CD8-positive, alpha-beta T cell (primary cell): ENCODE measurements at regions of chr5 and their contacts with region 1.

Region 1: DNA sequence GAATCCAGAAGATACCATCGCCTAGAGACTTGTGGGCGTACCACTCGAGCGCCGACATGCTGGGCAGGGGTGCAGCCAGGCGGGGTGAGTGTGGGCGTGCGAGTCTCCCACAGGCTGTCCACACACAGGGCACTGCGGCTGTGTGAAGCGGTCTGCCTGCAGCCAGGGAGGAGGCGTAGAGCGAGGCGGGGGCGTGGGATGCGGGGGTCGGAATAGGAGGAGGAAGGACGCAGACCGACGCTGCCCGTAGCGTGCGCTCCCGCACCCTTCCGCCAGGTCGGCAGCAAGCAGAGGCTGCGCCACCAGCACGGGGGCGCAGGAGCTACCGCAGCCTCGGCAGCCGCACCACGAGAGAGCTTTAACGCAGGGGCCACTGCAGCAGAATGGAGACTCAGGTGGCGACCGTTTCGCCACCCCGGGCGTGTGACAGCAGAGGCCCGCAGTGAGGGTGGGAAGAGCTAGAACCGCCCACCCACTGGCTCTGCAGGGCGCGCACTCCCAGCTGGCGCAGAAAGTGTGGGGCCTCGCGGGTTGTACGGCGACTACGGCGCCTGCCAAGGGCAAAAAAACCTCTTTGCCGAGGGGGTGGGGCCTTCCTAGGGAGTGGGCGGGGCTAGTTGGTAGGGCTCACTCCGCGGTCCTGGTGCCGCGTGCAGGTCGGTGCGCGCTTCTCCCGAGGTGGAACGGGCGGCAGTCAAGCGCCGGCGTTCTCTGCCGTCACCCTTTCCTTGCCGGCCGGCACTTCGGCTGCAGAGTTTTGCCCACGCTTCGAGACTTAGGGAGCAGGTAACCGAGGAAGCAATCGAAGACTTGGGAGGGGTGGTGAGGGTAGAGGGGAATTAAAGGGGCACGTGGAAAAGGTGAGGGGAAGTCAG is at the starts of genes MBLAC2 and POLR3G:
- DNase-seq: peak; percentile 88 to 96 (median 93)
- ATAC-seq: peak; percentile 88
- H3K4me3 ChIP-seq: peak within 1 kb of the TSS; percentile 93 to 95
- H3K4me3 Mint-ChIP-seq: peak within 1 kb of the TSS; percentile 99
- H3K27ac ChIP-seq: peak within 1 kb of the TSS; percentile 68 to 76
- H3K27ac Mint-ChIP-seq: peak within 1 kb of the TSS; percentile 96
- H3K4me1 ChIP-seq: peaks cover 16% of the 10 kb centered on the region
- H3K4me1 Mint-ChIP-seq: peaks cover 41% of the 10 kb centered on the region
- H3K27me3 ChIP-seq: no peaks in the 10 kb centered on the region
- H3K27me3 Mint-ChIP-seq: no peaks in the 10 kb centered on the region
- CTCF ChIP-seq: peak; percentile 54
- total RNA-seq, gene MBLAC2: 2.8 to 3.2 TPM
- total RNA-seq, gene POLR3G: 0.69 to 1.0 TPM

Region 2: DNA sequence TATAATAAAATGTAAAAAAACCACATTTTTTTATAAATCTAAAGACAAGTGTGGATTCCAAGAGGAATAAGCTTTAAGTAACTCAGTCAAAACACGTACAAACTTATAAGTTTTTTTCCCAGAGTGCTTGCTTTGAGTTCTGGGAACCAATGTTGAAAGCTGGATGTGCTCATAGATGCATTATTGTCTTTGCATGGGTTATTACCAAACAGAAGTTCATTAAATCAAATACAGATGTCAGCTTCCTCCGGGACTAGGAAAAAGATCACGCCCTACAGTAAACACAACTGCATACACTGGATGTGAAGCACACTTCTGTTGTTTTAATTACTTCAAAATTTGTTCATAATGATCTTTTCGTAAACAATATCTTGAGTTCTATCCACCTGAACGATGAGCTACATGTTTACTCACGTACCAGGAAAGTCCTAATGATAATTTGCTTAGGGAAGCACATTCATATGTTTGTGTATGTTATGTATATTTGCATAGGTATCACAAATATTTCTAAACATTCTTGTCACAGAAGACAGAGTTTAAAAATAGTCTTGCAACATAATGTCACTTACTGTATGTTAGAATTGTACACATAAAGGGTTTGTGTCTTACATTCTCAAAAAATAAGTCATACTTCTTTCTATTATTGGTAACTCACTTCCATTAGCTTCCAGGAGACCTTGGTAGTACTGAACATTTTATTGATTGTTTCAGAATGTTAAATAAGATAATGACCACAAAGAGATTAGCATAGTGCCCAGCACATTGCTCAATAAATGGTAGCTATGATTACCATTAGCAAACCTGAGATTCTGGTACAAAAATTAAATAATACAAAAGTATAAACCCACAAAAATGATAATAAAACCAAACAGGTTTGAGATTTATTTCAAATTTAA is 492.3 kb before region 1 on chr5:
- CTCF ChIA-PET with region 1: no interaction called
- POLR2A ChIA-PET with region 1: no interaction called
- intact Hi-C with region 1: no loop called
- DNase-seq: no peak
- ATAC-seq: no peak
- H3K4me3 ChIP-seq: no peak overlapping the region
- H3K4me3 Mint-ChIP-seq: no peak overlapping the region
- H3K27ac ChIP-seq: no peak overlapping the region
- H3K27ac Mint-ChIP-seq: no peak overlapping the region
- H3K4me1 ChIP-seq: no peaks in the 10 kb centered on the region
- H3K4me1 Mint-ChIP-seq: no peaks in the 10 kb centered on the region
- H3K27me3 ChIP-seq: no peaks in the 10 kb centered on the region
- H3K27me3 Mint-ChIP-seq: no peaks in the 10 kb centered on the region
- CTCF ChIP-seq: no peak

Region 3: GRCh38 chr5:90409318-90410177 is 64.9 kb before region 1 on chr5 and contains the start of gene CETN3:
- CTCF ChIA-PET with region 1: interaction called, 6 read pairs
- POLR2A ChIA-PET with region 1: interaction called, 35 read pairs
- intact Hi-C with region 1: loop called (anchors 1 kb)
- DNase-seq: peak; percentile 81 to 96 (median 89)
- ATAC-seq: peak; percentile 90
- H3K4me3 ChIP-seq: peak within 1 kb of the TSS; percentile 91 to 99
- H3K4me3 Mint-ChIP-seq: no peak within 1 kb of the TSS
- H3K27ac ChIP-seq: peak within 1 kb of the TSS; percentile 93 to 95
- H3K27ac Mint-ChIP-seq: no peak within 1 kb of the TSS
- H3K4me1 ChIP-seq: peaks cover 7% of the 10 kb centered on the region
- H3K4me1 Mint-ChIP-seq: peaks cover 24% of the 10 kb centered on the region
- H3K27me3 ChIP-seq: no peaks in the 10 kb centered on the region
- H3K27me3 Mint-ChIP-seq: no peaks in the 10 kb centered on the region
- CTCF ChIP-seq: no peak
- total RNA-seq, gene CETN3: 2.4 to 3.4 TPM

Region 4: GRCh38 chr5:90440644-90441043 is 33.8 kb before region 1 on chr5:
- CTCF ChIA-PET with region 1: interaction called, 6 read pairs
- POLR2A ChIA-PET with region 1: no interaction called
- intact Hi-C with region 1: loop called (anchors 1 kb)
- DNase-seq: no peak
- ATAC-seq: no peak
- H3K4me3 ChIP-seq: no peak overlapping the region
- H3K4me3 Mint-ChIP-seq: peak overlapping the region; percentile 82
- H3K27ac ChIP-seq: no peak overlapping the region
- H3K27ac Mint-ChIP-seq: no peak overlapping the region
- H3K4me1 ChIP-seq: no peaks in the 10 kb centered on the region
- H3K4me1 Mint-ChIP-seq: peaks cover 8% of the 10 kb centered on the region
- H3K27me3 ChIP-seq: no peaks in the 10 kb centered on the region
- H3K27me3 Mint-ChIP-seq: peaks cover 5% of the 10 kb centered on the region
- CTCF ChIP-seq: no peak

Region 5: DNA sequence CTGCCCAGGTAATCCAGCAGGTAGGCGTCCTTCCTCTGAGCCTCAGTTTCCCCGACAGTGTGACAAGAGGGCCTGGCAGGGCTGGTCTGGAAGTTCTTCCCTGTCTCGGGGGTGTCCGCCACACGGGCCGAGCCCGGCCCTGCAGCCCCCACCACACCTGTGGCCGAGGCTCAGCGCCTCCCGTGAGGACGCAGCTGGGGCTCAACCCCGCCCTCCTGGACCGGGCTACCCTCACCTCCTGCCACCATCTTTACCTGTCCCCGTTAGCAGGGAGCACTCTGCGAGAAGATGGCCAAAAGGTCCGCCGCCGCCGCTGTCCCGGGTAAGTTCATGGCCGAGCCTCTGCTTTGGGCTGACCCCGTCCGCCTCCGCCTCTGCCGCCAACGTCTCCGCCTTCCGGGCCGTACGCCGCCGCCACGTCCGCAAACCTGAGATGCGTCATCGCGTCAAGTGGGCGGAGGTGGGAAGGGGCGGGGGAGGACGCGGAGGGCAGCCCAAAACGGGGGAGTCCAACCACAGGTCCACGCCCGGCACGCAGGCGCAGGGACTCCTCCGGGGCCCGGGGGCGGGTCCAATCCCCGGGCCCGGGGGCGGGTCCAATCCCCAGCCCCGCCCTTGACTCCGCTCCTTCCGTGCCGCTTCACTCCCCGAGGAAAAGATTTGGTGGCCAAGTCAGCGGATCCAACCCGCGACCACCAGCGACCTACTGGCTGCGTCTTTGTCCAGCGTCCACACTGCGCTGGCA is 54.9 kb after region 1 on chr5 and contains the start of gene LYSMD3:
- CTCF ChIA-PET with region 1: interaction called, 14 read pairs
- POLR2A ChIA-PET with region 1: interaction called, 29 read pairs
- intact Hi-C with region 1: loop called (anchors 1 kb)
- DNase-seq: peak; percentile 94 to 99 (median 98)
- ATAC-seq: peak; percentile 91
- H3K4me3 ChIP-seq: peak within 1 kb of the TSS; percentile 90 to 98
- H3K4me3 Mint-ChIP-seq: peak within 1 kb of the TSS; percentile 99
- H3K27ac ChIP-seq: peak within 1 kb of the TSS; percentile 95 to 98
- H3K27ac Mint-ChIP-seq: peak within 1 kb of the TSS; percentile 99
- H3K4me1 ChIP-seq: peaks cover 27% of the 10 kb centered on the region
- H3K4me1 Mint-ChIP-seq: peaks cover 37% of the 10 kb centered on the region
- H3K27me3 ChIP-seq: no peaks in the 10 kb centered on the region
- H3K27me3 Mint-ChIP-seq: peaks cover 11% of the 10 kb centered on the region
- CTCF ChIP-seq: no peak
- total RNA-seq, gene LYSMD3: 25.8 to 30.9 TPM